ENCODE measurements at regions of chr2 and their contacts with region 1.

Region 1: GRCh38 chr2:75241696-75242095 is 42.4 kb upstream of the TACR1 start:
- DNase-seq: no peak
- H3K4me3 ChIP-seq: no peak overlapping the region
- H3K27ac ChIP-seq: no peak overlapping the region
- H3K4me1 ChIP-seq: no peaks in the 10 kb centered on the region
- H3K27me3 ChIP-seq: no peaks in the 10 kb centered on the region
- CTCF ChIP-seq: peak in 2 of 3 experiments; percentile 61 to 62; a peak in 3 of 4 replicates
- EP300 ChIP-seq: no peak
- POLR2A ChIP-seq: no peak
- RAD21 ChIP-seq: peak; percentile 79 to 84

Region 2: DNA sequence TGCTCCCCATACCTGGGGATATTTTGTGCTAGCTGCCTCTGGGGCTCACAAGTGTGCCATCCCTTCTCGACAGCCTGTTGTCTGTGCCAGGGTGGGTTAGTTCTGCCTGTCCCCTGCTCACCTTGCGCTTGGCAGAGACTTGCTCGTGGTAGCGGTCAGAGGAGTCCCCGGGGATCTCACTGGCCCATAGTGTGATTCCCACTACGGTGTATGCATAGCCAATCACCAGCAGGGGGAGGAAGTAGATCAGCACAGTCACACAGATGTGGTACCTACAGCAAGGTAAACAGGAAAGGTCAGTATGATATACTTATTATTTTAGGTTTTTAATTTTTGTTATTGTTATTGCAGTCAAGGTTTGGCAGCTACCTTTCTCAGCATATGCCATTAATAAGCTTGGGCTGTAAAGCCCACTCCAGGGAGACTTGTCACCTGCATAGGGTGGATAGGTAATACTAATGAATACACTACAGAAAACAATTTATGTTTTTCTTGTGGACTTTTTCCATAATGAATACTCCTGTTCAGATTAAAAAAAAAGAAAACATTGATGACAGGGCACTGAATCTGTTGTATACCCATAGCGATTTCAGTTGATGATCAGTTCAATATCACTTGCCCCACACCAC is 188.1 kb before region 1 on chr2:
- CTCF ChIA-PET with region 1: interaction called, 15 read pairs
- POLR2A ChIA-PET with region 1: no interaction called
- DNase-seq: peak; percentile 31 to 66
- H3K4me3 ChIP-seq: no peak overlapping the region
- H3K27ac ChIP-seq: no peak overlapping the region
- H3K4me1 ChIP-seq: peaks cover 9 to 35% (median 14%) of the 10 kb centered on the region in 4 experiments; a peak in 6 of 7 replicates
- H3K27me3 ChIP-seq: peaks cover 0 to 4% (median 2%) of the 10 kb centered on the region in 4 experiments; a peak in 4 of 7 replicates
- CTCF ChIP-seq: peak; percentile 74 to 93 (median 77)
- EP300 ChIP-seq: no peak
- POLR2A ChIP-seq: no peak
- RAD21 ChIP-seq: peak; percentile 84 to 90

Region 3: GRCh38 chr2:75098856-75099255 is 142.8 kb before region 1 on chr2:
- CTCF ChIA-PET with region 1: interaction called, 12 read pairs
- POLR2A ChIA-PET with region 1: no interaction called
- DNase-seq: no peak
- H3K4me3 ChIP-seq: no peak overlapping the region
- H3K27ac ChIP-seq: no peak overlapping the region
- H3K4me1 ChIP-seq: no peaks in the 10 kb centered on the region
- H3K27me3 ChIP-seq: no peaks in the 10 kb centered on the region
- CTCF ChIP-seq: peak; percentile 46 to 64 (median 55)
- EP300 ChIP-seq: no peak
- POLR2A ChIP-seq: no peak
- RAD21 ChIP-seq: peak; percentile 68 to 69

Region 4: DNA sequence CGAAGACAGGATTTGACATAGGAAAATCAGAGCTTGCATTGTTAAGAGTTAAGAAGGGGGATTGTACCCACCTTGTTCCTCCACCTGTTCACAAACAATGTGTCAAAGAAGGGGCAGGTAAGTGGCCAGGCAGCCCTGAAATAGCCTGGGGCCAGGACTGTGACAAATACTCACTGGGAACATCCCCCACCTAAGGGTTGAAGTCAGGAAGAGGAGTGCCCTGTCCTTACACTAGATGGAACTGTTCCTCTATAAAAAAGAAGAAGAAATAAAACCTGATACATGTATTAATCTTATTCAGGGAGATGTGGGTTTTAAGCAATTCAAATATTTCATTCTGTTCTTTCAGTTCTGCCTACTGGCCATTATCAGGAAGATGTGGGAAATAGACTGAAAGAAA is 84.3 kb before region 1 on chr2:
- CTCF ChIA-PET with region 1: interaction called, 34 read pairs
- POLR2A ChIA-PET with region 1: no interaction called
- DNase-seq: no peak
- H3K4me3 ChIP-seq: no peak overlapping the region
- H3K27ac ChIP-seq: no peak overlapping the region
- H3K4me1 ChIP-seq: peaks cover 4 to 10% (median 4%) of the 10 kb centered on the region in 4 experiments; a peak in 6 of 7 replicates
- H3K27me3 ChIP-seq: no peaks in the 10 kb centered on the region
- CTCF ChIP-seq: peak in 2 of 3 experiments; percentile 30 to 41; a peak in 2 of 4 replicates
- EP300 ChIP-seq: no peak
- POLR2A ChIP-seq: no peak
- RAD21 ChIP-seq: peak; percentile 61 to 64

Region 5: GRCh38 chr2:75199428-75200011 is 42.2 kb before region 1 on chr2 and contains the start of gene TACR1:
- CTCF ChIA-PET with region 1: interaction called, 20 read pairs
- POLR2A ChIA-PET with region 1: no interaction called
- DNase-seq: peak in 1 of 2 experiments; percentile 66
- H3K4me3 ChIP-seq: peak within 1 kb of the TSS; percentile 42 to 67 (median 62)
- H3K27ac ChIP-seq: no peak within 1 kb of the TSS
- H3K4me1 ChIP-seq: peaks cover 0 to 12% (median 6%) of the 10 kb centered on the region in 4 experiments; a peak in 5 of 7 replicates
- H3K27me3 ChIP-seq: peaks cover 21 to 56% (median 49%) of the 10 kb centered on the region in 4 experiments
- CTCF ChIP-seq: peak; percentile 31 to 38 (median 35)
- EP300 ChIP-seq: no peak
- POLR2A ChIP-seq: no peak
- RAD21 ChIP-seq: peak; percentile 22 to 42; a peak in 3 of 4 replicates
- total RNA-seq, gene TACR1: 0.19 and 0.37 TPM in 2 replicates

Measured in H1 (cell line).